CD8-positive, alpha-beta memory T cell (primary cell): ENCODE measurements at regions of chr6 and their contacts with region 1.

Region 1: DNA sequence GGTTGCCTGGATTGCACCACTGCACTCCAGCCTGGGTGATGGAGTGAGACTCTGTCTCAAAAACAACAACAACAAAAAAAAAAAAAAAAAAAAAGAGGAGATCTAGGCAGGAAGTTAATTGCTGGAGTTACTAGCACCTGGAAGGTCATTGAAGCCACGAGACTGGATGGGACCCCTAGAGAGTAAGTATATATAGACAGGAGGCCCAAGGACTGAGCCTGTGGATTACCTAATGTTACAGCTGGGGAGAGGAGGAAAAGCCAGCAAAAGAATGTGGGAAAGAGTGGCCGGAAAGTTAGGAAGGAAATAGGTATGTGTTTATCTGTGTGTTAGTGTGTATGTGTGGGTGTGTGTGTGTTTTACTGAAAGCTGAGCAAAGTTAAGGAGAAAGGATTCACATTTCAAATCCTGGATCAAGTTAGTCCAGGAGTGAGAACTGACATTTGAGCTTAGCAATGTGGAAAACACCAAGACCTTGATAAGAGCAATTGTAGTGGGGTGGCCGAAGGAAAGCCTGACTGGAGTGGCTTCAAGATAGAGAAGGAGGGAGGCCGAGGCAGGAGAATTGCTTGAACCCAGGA is 38.4 kb downstream of the ANKRD6 start:
- DNase-seq: no peak
- H3K4me3 ChIP-seq: no peak overlapping the region
- H3K4me3 Mint-ChIP-seq: peak overlapping the region in 1 of 7 donors; percentile 32
- H3K27ac ChIP-seq: no peak overlapping the region
- H3K27ac Mint-ChIP-seq: peak overlapping the region in 2 of 8 donors; percentile 2 to 43
- H3K4me1 ChIP-seq: peaks cover 17% of the 10 kb centered on the region
- H3K4me1 Mint-ChIP-seq: peaks cover 19 to 24% (median 24%) of the 10 kb centered on the region in 3 donors
- H3K27me3 ChIP-seq: no peaks in the 10 kb centered on the region
- H3K27me3 Mint-ChIP-seq: peaks cover 0 to 4% of the 10 kb centered on the region in 2 donors

Region 2: GRCh38 chr6:89161326-89162046 is 309.9 kb before region 1 on chr6:
- CTCF ChIA-PET with region 1: no interaction called
- POLR2A ChIA-PET with region 1: interaction called, 10 read pairs
- DNase-seq: no peak
- H3K4me3 ChIP-seq: no peak overlapping the region
- H3K4me3 Mint-ChIP-seq: no peak overlapping the region
- H3K27ac ChIP-seq: no peak overlapping the region
- H3K27ac Mint-ChIP-seq: no peak overlapping the region
- H3K4me1 ChIP-seq: no peaks in the 10 kb centered on the region
- H3K4me1 Mint-ChIP-seq: peaks cover 0 to 2% (median 0%) of the 10 kb centered on the region in 3 donors
- H3K27me3 ChIP-seq: no peaks in the 10 kb centered on the region
- H3K27me3 Mint-ChIP-seq: no peaks in the 10 kb centered on the region

Region 3: DNA sequence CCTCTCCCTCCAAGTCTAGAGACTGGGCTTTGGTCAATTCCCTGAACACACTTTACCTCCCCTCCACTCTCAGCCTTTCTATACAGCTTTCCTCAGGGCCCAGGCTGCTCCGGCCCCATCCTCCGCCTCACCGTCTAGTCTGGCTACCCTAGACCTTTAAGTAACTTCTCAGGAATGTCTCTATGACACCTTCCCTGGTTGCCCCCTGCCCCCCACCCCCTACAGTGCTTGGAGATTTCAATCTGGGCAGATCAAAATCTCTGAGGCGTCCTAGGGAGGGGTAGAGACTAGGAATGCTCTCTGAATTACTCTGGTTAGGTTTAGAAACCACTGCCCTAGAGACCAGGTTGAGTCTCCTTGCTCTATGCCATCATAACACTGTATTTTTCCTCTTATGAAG is 124.9 kb before region 1 on chr6:
- CTCF ChIA-PET with region 1: no interaction called
- POLR2A ChIA-PET with region 1: no interaction called
- DNase-seq: no peak
- H3K4me3 ChIP-seq: no peak overlapping the region
- H3K4me3 Mint-ChIP-seq: no peak overlapping the region
- H3K27ac ChIP-seq: no peak overlapping the region
- H3K27ac Mint-ChIP-seq: peak overlapping the region in 6 of 8 donors; percentile 9 to 74 (median 14)
- H3K4me1 ChIP-seq: peaks cover 36% of the 10 kb centered on the region
- H3K4me1 Mint-ChIP-seq: peaks cover 54 to 69% (median 65%) of the 10 kb centered on the region in 3 donors
- H3K27me3 ChIP-seq: no peaks in the 10 kb centered on the region
- H3K27me3 Mint-ChIP-seq: no peaks in the 10 kb centered on the region